ENCODE measurements at regions of chr7 and their contacts with region 1.

Region 1: GRCh38 chr7:104923010-104923421 is 91.0 kb upstream of the KMT2E start:
- DNase-seq: peak; percentile 92
- H3K4me3 ChIP-seq: no peak overlapping the region
- H3K27ac ChIP-seq: no peak overlapping the region
- H3K4me1 ChIP-seq: peaks cover 11% of the 10 kb centered on the region
- CTCF ChIP-seq: peak; percentile 97

Region 2: DNA sequence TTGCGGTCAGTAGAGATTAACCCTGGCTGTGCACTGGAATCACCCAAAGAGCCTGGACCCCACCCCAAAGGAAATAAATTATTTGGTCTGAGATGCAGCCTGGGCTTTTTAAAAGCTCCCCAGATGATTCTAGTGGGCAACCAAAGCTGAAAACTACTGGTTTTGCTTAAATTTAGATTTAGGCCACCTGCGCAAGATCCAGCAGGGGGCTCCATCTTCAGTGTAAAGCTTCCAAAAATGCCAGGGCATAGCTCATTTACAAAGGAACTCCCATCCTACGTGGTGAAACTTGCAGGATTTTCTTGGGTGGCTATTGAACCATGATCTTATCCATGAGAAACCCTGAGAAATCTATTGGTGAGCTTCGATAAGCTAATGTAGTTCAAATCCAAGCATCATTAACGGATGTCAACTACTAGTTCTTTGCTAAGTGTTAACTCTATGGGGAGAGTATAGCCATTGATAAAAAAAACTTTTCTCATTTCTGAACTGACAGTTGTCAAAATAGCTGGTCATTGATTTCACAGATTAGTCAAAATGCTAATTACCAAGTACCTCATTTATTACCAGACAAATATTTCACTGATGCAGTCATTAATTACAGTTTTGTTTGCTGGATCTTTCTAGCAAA is 279.3 kb before region 1 on chr7:
- CTCF ChIA-PET with region 1: no interaction called
- POLR2A ChIA-PET with region 1: no interaction called
- intact Hi-C with region 1: loop called (anchors 5 kb)
- DNase-seq: peak; percentile 13
- H3K4me3 ChIP-seq: no peak overlapping the region
- H3K27ac ChIP-seq: no peak overlapping the region
- H3K4me1 ChIP-seq: no peaks in the 10 kb centered on the region
- CTCF ChIP-seq: peak; percentile 80

Region 3: DNA sequence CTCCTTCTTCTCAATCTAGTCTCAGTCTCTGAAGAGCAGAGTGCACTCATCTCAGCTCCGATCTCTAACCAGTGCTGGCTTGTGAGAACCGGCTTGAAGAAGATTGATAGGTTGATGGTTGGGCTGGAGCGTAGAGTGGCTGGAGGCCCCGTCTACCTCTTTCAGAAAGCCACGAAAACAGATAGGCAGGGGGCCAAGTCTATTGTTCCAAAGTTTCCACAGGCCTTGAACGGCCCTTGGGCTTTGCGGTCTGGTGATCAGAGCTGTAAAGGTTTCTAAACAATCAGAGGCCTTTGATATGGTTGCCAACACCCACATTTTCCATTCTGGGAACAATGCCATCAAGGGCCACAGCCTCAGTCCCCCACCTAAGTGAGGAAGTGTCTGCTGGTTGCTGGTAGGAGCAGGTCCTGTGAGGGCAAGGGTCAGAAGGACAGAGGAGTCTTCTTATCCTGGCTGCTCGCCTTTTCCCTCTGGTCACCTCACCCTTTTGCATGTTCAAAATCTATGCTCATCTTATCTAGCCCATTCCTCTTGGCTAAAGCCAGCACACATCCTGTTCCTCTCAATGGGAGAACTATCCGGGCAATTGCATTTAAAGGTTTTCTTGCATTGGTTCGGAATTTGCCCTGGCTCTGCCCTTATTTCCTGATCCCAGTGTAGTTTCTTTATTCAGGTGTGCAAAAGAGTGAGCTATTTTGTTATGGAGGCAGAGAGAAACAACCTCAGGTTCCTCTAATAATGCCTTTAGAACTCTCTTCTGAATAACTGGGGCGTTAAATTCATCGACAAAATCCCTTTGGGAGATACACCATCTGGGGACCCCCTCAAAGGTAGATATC is 20.7 kb after region 1 on chr7:
- CTCF ChIA-PET with region 1: interaction called, 4 read pairs
- POLR2A ChIA-PET with region 1: interaction called, 10 read pairs
- intact Hi-C with region 1: loop called (anchors 2 kb)
- DNase-seq: peak; percentile 88
- H3K4me3 ChIP-seq: peak overlapping the region; percentile 65
- H3K27ac ChIP-seq: peak overlapping the region; percentile 96
- H3K4me1 ChIP-seq: peaks cover 86% of the 10 kb centered on the region
- CTCF ChIP-seq: no peak

Region 4: GRCh38 chr7:105101864-105102263 is 178.8 kb after region 1 on chr7:
- CTCF ChIA-PET with region 1: no interaction called
- POLR2A ChIA-PET with region 1: no interaction called
- intact Hi-C with region 1: loop called (anchors 5 kb)
- DNase-seq: no peak
- H3K4me3 ChIP-seq: no peak overlapping the region
- H3K27ac ChIP-seq: no peak overlapping the region
- H3K4me1 ChIP-seq: no peaks in the 10 kb centered on the region
- CTCF ChIP-seq: no peak

Region 5: GRCh38 chr7:105429746-105430612 is 507.0 kb after region 1 on chr7:
- CTCF ChIA-PET with region 1: no interaction called
- POLR2A ChIA-PET with region 1: no interaction called
- intact Hi-C with region 1: loop called (anchors 5 kb)
- DNase-seq: peak; percentile 63
- H3K4me3 ChIP-seq: no peak overlapping the region
- H3K27ac ChIP-seq: no peak overlapping the region
- H3K4me1 ChIP-seq: no peaks in the 10 kb centered on the region
- CTCF ChIP-seq: peak; percentile 79

Measured in OCI-LY7 (cell line).